ENCODE measurements at regions of chr10 and their contacts with region 1.

Region 1: DNA sequence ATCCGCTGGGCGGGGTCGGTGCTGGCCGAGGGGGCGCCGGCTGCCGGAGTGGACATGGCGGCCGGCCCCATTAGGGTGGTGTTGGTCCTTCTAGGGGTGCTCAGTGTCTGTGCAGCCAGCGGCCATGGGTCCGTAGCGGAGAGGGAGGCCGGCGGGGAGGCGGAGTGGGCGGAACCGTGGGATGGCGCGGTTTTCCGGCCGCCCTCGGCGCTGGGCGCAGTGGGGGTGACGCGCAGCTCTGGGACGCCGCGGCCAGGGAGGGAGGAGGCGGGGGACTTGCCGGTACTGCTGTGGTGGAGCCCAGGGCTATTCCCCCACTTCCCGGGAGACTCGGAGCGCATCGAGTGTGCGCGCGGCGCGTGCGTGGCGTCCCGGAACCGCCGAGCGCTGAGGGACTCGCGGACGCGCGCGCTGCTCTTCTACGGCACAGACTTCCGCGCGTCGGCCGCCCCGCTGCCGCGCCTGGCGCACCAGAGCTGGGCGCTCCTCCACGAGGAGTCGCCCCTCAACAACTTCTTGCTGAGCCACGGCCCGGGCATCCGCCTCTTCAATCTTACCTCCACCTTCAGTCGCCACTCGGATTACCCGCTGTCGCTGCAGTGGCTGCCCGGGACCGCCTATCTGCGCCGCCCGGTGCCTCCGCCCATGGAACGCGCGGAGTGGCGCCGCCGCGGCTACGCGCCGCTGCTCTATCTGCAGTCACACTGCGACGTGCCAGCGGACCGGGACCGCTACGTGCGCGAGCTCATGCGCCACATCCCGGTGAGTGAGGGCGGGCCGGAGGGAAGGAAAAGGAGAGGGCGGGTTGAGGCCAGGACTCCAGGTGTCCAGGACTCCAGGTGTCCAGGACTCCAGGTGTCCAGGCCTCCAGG is 9.3 kb upstream of the CHCHD1 start:
- DNase-seq: peak; percentile 99
- ATAC-seq: peak; percentile 66
- H3K4me3 ChIP-seq: peak overlapping the region; percentile 73
- H3K27ac ChIP-seq: peak overlapping the region; percentile 71
- H3K4me1 ChIP-seq: peaks cover 26% of the 10 kb centered on the region
- H3K27me3 ChIP-seq: no peaks in the 10 kb centered on the region
- CTCF ChIP-seq: peak; percentile 53

Region 2: GRCh38 chr10:73559590-73559989 is 212.9 kb before region 1 on chr10:
- CTCF ChIA-PET with region 1: interaction called, 10 read pairs
- POLR2A ChIA-PET with region 1: no interaction called
- intact Hi-C with region 1: no loop called
- DNase-seq: peak; percentile 70
- ATAC-seq: peak; percentile 61
- H3K4me3 ChIP-seq: no peak overlapping the region
- H3K27ac ChIP-seq: no peak overlapping the region
- H3K4me1 ChIP-seq: no peaks in the 10 kb centered on the region
- H3K27me3 ChIP-seq: no peaks in the 10 kb centered on the region
- CTCF ChIP-seq: no peak

Region 3: DNA sequence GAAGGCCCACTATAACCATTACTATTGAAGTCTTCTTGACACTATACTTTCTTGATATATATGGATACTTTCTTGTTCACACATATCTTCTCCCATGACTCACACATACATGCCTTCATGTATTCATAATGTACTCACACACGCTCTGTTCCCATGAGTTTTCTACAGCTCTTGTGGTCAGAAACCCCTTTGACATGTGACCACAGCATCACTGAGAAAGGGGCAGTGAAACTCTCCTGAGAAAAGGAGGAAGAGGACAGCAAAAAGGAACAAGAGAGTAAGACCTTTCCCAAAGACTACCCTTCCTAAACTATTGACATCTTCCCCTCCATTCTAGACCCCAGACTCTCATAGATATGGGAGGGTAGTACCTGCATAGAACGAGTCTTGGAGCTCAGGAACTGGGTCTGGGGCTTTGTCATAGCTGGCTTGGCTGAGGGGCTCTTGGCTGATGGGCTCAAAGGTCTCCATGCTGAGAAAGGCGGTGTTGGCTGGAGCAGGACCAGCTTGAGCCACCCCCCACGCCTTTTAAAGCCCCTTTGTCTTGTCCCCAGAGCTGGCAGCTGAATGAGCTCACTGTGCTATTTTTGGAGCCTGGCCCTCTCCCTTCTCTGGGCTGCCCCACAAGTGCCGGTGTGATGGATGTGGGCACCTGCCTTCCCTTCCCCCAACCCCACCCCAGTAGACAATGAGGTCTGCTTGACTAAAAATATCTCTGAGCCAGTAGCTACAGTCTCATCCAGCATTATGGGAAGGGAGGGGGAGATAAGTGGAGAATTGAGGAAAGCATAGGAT is 121.8 kb before region 1 on chr10:
- CTCF ChIA-PET with region 1: interaction called, 10 read pairs
- POLR2A ChIA-PET with region 1: interaction called, 3 read pairs
- intact Hi-C with region 1: no loop called
- DNase-seq: peak; percentile 53
- ATAC-seq: no peak
- H3K4me3 ChIP-seq: no peak overlapping the region
- H3K27ac ChIP-seq: no peak overlapping the region
- H3K4me1 ChIP-seq: no peaks in the 10 kb centered on the region
- H3K27me3 ChIP-seq: no peaks in the 10 kb centered on the region
- CTCF ChIP-seq: no peak

Region 4: DNA sequence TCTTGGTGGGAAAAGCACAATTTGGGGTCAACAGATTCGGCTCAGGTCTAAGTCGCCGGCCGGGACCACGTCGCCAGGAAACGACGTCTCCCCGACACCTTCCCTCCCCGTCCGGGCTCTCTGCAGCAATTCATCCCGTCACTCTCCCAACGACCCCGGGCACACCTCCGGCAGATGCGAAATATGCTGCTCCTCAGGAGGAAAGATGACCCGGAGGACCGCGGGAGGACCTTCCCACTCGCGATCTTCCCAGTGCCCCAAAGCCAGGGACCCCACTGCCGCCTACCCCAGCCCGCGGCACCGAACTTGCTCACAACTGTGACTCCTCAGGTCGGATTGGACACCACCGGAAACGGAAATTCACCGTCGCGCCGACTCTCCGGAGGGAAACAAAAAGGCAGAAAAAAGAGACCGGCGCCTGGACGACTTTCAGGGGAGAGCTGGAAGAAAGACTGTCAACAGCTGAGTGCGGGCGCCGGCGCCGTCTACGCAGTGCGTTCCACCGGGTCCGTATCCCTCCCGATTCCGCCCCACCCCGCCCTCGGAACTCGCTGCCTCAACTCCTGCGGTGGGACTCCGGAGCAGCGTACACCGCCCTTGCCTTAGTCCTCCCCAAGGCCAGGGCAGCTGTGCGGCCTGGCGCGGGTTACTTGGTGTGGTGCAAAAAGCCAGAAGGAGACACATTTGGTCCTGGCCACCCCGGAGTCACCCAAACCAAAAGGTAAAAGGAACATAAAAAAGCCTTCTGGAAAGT is 42.2 kb before region 1 on chr10:
- CTCF ChIA-PET with region 1: interaction called, 3 read pairs
- POLR2A ChIA-PET with region 1: interaction called, 9 read pairs
- intact Hi-C with region 1: loop called (anchors 2 kb)
- DNase-seq: peak; percentile 100
- ATAC-seq: peak; percentile 87
- H3K4me3 ChIP-seq: peak overlapping the region; percentile 69
- H3K27ac ChIP-seq: peak overlapping the region; percentile 72
- H3K4me1 ChIP-seq: peaks cover 9% of the 10 kb centered on the region
- H3K27me3 ChIP-seq: no peaks in the 10 kb centered on the region
- CTCF ChIP-seq: no peak

Region 5: DNA sequence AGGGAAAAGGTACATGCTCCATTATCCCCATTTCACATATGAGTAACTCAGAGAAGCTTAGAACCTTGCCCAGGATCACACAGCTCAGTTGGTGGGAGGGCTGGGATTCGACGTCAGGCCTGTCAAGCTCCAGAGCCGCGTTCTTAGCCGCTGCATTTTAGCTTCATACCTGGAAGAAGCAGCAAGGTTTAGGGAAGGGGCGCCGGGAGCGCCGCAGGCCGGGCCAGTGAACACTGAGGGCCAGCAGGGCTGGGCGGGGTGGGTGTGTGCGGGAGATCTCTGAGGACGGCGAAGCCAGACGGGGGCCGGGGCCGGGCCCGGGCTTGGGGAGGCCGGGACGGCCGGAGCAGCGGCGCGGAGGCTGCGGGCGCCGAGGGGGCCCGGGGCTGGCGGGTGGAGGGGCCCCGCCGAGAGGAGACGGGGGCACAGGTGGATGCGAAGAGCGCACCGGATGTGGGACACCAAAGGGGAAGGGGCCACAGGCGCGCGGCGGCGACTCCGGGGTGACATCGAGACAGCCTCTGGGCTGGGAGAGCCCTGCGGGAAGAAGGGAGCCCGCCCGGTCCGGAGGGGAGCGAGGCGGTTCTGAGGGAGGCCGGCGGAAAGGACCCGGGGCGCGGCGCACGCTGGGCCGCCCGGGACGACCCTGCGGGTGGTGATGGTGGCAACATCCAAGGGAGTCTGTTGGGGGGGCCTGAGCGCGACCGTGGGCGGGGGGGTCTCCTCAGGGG is 38.4 kb after region 1 on chr10:
- CTCF ChIA-PET with region 1: interaction called, 4 read pairs
- POLR2A ChIA-PET with region 1: interaction called, 11 read pairs
- intact Hi-C with region 1: loop called (anchors 2 kb)
- DNase-seq: peak; percentile 68
- ATAC-seq: peak; percentile 42
- H3K4me3 ChIP-seq: peak overlapping the region; percentile 79
- H3K27ac ChIP-seq: peak overlapping the region; percentile 22
- H3K4me1 ChIP-seq: peaks cover 4% of the 10 kb centered on the region
- H3K27me3 ChIP-seq: no peaks in the 10 kb centered on the region
- CTCF ChIP-seq: no peak

Measured in PC-3 (cell line).